ENCODE measurements at regions of chr11 and their contacts with region 1.

Region 1: DNA sequence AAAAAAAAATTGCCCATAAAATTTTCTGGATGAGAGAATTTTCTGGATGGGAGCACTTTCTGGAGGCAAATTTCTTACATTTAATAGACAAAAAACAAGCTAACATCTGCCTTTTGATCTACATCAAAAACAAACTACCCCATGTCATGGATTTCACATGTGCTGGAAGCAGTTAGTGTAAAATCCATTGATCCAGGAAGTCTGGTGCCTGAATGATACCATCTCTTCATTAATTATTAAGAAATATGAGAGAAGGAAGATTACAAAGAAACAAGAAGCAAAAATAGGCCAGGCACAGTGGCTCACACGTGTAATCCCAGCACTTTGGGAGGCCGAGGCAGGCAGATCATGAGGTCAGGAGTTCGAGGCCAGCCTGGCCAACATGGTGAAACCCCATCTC is 53.2 kb upstream of the FAM181B start:
- DNase-seq: no peak
- ATAC-seq: no peak
- H3K4me3 ChIP-seq: no peak overlapping the region
- H3K27ac ChIP-seq: no peak overlapping the region
- H3K4me1 ChIP-seq: no peaks in the 10 kb centered on the region
- CTCF ChIP-seq: no peak
- EP300 ChIP-seq: no peak
- POLR2A ChIP-seq: no peak
- RAD21 ChIP-seq: no peak

Region 2: DNA sequence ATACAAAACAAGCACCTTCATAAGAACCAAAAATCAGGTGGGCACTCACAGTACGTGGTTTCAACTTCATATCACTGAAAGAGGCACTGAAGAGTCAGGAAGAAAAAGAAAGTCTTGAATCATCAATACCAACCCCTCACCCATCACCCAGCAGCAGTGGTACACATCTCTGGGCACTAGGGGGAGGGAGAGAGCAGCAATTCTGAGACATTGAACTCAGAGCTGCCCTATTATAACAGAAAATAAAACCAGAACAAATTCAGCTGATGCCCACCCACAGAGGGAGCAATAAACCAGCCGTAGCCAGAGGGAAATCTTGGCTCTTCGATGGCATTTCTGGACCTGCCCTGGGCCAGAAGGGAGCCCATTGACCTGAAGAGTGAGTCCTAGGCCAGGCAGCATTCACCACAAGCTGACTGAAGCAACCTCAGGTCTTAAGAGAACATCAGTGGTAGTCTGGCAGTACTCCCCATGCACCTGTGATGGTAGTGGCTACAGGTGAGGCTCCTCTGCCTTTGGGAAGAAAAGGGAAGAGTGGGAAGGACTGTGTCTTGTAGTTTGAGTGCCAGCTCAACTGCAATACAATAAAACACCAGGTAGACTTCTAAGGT is 11.0 kb before region 1 on chr11:
- CTCF ChIA-PET with region 1: interaction called, 12 read pairs
- POLR2A ChIA-PET with region 1: no interaction called
- DNase-seq: peak; percentile 40 to 42
- ATAC-seq: peak; percentile 89 to 96
- H3K4me3 ChIP-seq: no peak overlapping the region
- H3K27ac ChIP-seq: no peak overlapping the region
- H3K4me1 ChIP-seq: no peaks in the 10 kb centered on the region
- CTCF ChIP-seq: peak; percentile 54
- EP300 ChIP-seq: no peak
- POLR2A ChIP-seq: no peak
- RAD21 ChIP-seq: peak; percentile 34 to 72; a peak in 3 of 5 replicates

Measured in A549 (cell line).